Cardiac septum (tissue), 1 donor: ENCODE measurements at regions of chr12 and their contacts with region 1.

Region 1: DNA sequence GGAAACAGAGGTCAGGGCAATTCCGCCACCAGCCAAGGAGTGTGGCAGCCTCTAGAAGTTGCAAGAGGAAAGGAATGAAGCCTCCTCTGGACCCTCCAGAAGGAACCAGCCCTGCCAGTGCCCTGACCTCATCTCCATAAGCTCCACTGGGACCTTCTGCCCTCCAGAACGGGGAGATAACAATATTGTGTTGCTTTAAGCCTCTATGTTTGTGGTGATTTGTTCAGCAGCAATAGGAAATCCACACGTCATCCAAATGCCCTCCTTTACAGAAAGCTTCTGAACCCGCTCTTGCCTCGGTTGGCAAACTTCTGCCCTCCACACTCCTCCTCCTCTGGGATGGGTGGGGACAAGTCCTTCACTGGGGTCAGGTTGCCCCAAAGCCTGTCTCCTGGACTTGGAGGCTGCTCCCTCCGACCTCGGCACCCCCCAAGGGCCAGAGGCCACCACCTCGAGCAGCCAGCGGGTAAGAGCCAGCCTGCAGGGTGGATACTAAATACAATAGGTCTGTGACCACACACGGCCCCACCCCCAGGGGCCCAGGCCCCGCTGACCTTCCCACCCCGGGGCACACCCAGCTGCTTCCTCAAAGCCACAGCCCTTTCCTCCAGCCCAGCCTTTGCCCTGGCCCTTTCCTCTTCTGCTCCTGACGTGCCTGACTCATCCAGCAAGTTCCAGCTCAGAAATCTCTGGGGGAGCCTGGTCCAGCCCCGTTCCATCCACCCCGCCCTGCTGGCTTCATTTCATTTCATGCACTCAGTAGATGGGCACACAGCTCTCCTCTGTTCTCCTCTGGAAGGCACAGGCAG is 58.7 kb upstream of the NCOR2 start:
- DNase-seq: peak; percentile 92

Region 2: DNA sequence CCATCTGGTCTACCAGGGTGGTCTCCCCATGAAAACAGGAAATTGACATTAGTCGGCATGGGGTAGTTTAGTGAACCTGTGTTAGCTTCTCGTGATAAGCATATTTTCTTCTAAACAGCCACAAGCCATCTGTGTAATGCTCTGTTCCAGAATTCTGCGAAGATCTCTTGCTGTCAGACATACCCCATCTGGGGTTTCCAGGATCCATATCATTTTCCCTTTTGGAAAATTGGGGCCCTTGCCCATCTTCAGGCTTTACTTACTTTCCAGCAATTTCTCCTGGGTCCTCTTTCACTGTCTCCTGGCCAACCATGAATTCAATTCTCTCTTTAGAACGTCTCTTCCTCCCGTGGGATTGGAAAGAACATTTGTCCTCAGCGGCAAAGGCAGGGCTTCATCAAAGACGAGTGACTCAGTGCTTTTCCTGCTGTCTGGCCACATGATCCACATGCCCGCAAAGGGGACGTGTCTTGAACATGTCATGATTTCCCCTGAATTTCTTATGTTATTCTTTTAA is 37.3 kb before region 1 on chr12:
- intact Hi-C with region 1: loop called (anchors 2 kb)
- DNase-seq: peak; percentile 84

Region 3: DNA sequence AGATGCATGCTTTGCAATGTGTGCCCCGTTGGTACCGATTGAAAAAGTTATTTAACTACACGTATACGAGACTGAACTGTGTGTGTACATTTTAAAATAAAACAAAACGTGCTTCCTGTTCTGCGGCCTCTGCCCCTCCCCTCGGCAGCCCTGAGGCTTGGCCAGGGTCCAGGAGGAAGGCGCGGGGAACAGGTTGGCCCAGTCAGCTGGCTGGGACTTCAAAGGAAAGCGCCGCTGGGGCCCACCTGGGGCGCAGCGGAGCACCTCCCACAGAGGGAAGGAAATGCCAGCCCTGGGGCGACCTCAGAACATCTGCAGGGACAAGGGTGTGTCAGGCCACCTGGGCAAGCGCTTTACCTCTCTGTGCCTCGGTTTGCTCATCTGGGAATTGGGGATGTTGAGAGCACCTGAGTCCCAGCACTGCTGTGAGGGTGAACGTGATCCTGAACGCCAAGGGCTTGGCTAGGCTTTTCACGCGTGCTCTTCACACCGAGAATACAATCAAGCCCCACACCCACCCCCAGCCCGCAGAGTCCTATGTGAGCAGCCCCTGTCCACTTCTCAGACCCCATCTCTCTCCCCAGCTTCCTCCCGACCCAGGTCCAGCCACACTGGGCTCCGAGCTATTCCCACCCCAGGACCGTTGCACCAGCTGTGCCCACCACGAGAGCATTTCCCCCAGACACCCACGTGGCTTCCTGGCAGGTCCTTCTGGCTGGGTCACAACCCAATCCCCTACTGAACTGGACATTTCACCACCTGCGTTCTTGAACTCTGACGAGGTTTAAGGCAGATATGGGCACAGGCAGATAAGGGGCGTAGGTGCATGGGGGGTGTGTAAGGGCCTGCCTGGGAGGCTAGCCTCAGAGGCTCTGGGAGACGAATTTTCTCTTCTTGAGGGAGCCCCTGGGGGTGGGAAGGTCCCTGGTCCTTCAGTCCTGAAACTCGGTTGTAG is 16.8 kb before region 1 on chr12:
- intact Hi-C with region 1: no loop called
- DNase-seq: peak; percentile 87

Region 4: DNA sequence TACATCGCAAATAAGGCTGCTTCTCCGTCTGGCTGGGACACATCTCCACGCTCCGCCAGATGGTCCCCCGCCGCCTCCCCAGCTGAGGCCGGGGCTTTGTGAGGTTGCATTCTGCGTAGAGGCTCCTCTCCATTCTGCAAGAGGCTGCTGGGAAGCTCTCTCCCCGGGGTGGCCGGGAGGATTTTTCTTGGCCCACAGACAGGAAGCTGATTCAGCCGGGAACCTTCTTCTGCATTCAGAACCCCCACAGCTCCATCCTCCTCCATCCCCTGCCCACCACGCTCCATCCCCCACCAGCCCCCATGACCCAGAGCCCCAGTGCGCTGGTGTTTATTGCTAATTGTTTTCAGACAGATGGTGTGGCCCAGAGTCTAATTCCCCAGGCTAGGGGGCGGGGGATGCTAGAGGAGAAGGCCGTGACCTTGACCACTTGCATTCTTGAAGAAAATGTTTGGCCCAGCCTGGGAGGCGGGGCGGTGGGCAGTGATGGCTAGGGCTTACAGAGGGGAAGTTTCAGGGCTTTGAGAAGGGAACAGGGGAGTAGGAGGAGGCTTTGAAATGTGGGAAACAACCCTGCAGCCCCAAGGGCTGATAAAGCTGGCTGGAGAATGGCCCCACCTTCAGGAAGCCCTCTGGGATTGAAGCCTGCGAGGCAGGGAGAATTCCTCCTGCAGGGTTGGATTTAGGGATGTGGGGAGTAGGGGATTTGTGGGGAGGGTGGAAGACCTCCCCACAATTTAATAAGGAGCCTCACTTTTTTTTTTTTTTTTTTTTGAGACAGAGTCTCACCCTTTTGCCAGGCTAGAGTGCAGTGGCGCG is 29.8 kb after region 1 on chr12:
- intact Hi-C with region 1: loop called (anchors 2 kb)
- DNase-seq: peak; percentile 89

Region 5: DNA sequence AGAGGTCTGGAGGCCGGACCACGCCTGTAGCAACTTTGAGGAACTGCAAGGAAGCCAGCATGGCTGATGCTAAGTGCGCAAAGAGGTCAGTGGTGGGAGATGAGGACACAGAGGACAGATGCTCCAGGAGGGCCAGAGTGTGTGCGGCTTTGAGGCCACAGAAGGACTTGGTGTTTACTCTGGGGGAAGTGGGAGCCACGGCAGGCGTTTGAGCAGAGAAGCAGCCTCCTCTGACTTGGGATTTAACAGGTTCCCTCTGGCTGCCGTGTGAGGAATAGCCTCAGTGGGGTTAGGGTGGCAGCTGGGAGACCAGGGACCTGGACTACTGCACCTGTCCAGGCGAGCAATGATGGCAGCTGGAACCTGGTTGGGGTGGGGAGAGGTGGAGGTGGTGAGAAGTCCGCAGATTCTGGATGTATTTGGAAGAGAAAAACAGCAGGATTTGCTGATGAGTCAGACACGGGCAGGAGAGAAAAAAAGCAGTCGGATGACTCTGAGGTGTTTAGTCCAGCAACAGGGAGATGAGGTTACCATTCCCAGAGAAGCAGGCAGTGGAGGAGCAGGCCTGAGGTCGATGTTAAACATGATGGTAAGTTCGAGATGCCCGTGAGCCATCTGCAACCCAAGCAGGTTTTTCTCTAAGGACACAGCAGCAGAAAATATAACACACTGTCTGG is 94.1 kb after region 1 on chr12:
- intact Hi-C with region 1: loop called (anchors 5 kb)
- DNase-seq: no peak

Region 6: GRCh38 chr12:124927201-124928094 is 301.4 kb after region 1 on chr12:
- intact Hi-C with region 1: no loop called
- DNase-seq: peak; percentile 91